Common myeloid progenitor, CD34-positive (primary cell): ENCODE measurements at regions of chr14 and their contacts with region 1.

Region 1: GRCh38 chr14:77554207-77554606 is 55.6 kb upstream of the ISM2 start:
- DNase-seq: peak in 2 of 3 donors; percentile 15 to 69
- H3K4me3 ChIP-seq: peak overlapping the region in 1 of 7 experiments; percentile 30
- H3K27ac ChIP-seq: peak overlapping the region; percentile 59 to 70
- H3K4me1 ChIP-seq: peaks cover 0 to 13% (median 0%) of the 10 kb centered on the region in 4 experiments
- H3K27me3 ChIP-seq: no peaks in the 10 kb centered on the region

Region 2: GRCh38 chr14:77301103-77301502 is 253.1 kb before region 1 on chr14:
- CTCF ChIA-PET with region 1: interaction called, 16 read pairs
- POLR2A ChIA-PET with region 1: no interaction called
- DNase-seq: peak; percentile 81 to 89 (median 83)
- H3K4me3 ChIP-seq: no peak overlapping the region
- H3K27ac ChIP-seq: no peak overlapping the region
- H3K4me1 ChIP-seq: peaks cover 0 to 8% (median 6%) of the 10 kb centered on the region in 4 experiments
- H3K27me3 ChIP-seq: no peaks in the 10 kb centered on the region

Region 3: GRCh38 chr14:77457522-77458290 is 96.5 kb before region 1 on chr14 and contains the starts of genes AHSA1 and VIPAS39:
- CTCF ChIA-PET with region 1: interaction called, 48 read pairs
- POLR2A ChIA-PET with region 1: no interaction called
- DNase-seq: peak; percentile 99 to 100 (median 100)
- H3K4me3 ChIP-seq: peak within 1 kb of the TSS; percentile 94 to 100 (median 96)
- H3K27ac ChIP-seq: peak within 1 kb of the TSS; percentile 84 to 92
- H3K4me1 ChIP-seq: peaks cover 9 to 23% (median 20%) of the 10 kb centered on the region in 4 experiments
- H3K27me3 ChIP-seq: no peaks in the 10 kb centered on the region

Region 4: DNA sequence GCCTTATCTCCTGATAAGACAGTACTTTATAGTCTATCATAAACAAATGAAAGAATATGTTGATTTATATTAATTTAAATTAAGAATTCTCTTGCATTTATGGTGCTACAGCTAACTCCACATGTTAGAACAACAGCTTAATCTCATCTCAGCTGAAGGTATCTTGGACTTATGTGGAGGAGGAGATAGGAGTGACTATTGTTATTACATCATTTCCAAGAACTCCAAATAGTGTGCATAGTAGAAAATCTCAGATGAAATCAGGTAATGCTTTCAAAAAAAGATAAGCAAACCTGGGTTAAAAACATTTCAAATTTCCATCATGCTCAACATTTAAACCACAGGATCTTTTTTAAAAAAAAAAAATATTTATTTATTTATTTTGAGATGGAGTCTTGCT is 24.2 kb before region 1 on chr14:
- CTCF ChIA-PET with region 1: interaction called, 11 read pairs
- POLR2A ChIA-PET with region 1: no interaction called
- DNase-seq: no peak
- H3K4me3 ChIP-seq: no peak overlapping the region
- H3K27ac ChIP-seq: no peak overlapping the region
- H3K4me1 ChIP-seq: no peaks in the 10 kb centered on the region
- H3K27me3 ChIP-seq: no peaks in the 10 kb centered on the region

Region 5: DNA sequence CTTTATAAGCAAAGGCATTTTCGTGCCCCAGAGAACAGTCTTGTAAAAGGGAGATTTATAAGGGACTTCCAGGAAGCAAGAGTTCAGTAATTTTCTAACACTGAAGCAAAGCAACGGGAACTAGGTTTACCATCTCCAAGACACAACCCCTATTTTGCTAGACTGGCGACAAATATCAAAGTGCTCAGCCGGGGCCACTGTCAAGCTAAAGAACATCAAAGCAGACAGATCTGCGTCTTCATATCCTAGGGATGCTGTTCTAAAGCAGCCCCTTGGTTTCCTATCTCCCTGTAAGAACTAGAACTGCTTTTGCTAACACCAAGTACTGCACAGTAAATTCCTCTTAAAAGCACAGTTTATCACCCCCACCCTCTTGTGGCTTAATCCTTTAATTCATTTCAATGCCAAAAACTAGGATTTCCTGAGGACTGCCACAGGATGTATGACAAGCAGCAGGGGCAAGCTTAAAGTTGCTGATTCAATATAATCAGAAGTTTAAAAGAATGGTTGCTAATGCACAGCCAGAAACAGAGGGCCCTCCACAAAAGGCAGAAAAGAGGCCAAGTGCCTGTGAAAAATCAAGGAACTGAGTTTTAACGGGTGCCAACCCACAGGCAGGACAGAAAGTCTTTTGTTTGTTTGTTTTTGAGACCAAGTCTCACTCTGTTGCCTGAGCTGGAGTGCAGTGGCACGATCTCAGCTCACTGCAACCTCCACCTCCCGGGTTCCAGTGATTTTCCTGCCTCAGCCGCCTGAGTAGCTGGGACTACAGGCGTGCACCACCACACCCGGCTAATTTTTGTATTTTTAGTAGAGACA is 11.6 kb before region 1 on chr14:
- CTCF ChIA-PET with region 1: interaction called, 11 read pairs
- POLR2A ChIA-PET with region 1: interaction called, 3 read pairs
- DNase-seq: peak; percentile 59 to 85 (median 70)
- H3K4me3 ChIP-seq: peak overlapping the region in 5 of 7 experiments; percentile 1 to 57 (median 29)
- H3K27ac ChIP-seq: peak overlapping the region; percentile 37 to 77
- H3K4me1 ChIP-seq: peaks cover 7 to 38% (median 31%) of the 10 kb centered on the region in 4 experiments
- H3K27me3 ChIP-seq: no peaks in the 10 kb centered on the region

Region 6: DNA sequence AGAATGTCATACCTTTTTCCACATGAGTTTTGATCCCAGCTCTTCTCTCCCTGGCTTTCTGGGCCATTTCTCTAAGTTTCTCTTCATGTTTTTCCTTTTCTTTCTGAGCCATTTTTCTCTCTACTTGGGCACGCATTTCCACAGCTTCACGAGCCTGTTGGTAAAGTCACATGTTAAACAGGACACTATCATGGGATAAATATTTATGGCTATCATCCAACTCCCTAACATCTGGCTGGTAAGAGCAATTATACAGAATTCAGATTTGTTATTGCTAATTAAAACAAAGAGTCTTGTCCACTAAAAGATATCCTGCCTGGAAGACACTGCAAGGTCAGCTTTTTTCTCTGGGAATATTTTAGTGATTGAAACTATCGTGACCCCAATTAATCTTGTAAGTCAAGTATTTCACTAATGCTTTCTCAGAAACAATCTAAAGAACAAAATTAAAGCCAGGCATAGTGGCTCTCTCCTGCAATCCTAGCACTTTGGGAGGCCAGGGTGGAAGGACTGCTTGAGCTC is 176.8 kb after region 1 on chr14:
- CTCF ChIA-PET with region 1: no interaction called
- POLR2A ChIA-PET with region 1: no interaction called
- DNase-seq: no peak
- H3K4me3 ChIP-seq: no peak overlapping the region
- H3K27ac ChIP-seq: no peak overlapping the region
- H3K4me1 ChIP-seq: no peaks in the 10 kb centered on the region
- H3K27me3 ChIP-seq: no peaks in the 10 kb centered on the region